PC-9 (cell line): ENCODE measurements at regions of chr5 and their contacts with region 1.

Region 1: GRCh38 chr5:149035372-149035790 is 27.5 kb downstream of the SH3TC2 start:
- DNase-seq: peak; percentile 66 to 79
- H3K4me3 ChIP-seq: no peak overlapping the region
- H3K27ac ChIP-seq: peak overlapping the region; percentile 1; the same call in 1 of the 2 replicates
- H3K4me1 ChIP-seq: peaks cover 58% of the 10 kb centered on the region
- H3K27me3 ChIP-seq: no peaks in the 10 kb centered on the region
- CTCF ChIP-seq: peak; percentile 90

Region 2: GRCh38 chr5:148297731-148298130 is 737.6 kb before region 1 on chr5:
- CTCF ChIA-PET with region 1: no interaction called
- POLR2A ChIA-PET with region 1: no interaction called
- intact Hi-C with region 1: no loop called
- DNase-seq: no peak
- H3K4me3 ChIP-seq: no peak overlapping the region
- H3K27ac ChIP-seq: no peak overlapping the region
- H3K4me1 ChIP-seq: no peaks in the 10 kb centered on the region
- H3K27me3 ChIP-seq: no peaks in the 10 kb centered on the region
- CTCF ChIP-seq: no peak

Region 3: GRCh38 chr5:148443998-148444397 is 591.4 kb before region 1 on chr5:
- CTCF ChIA-PET with region 1: no interaction called
- POLR2A ChIA-PET with region 1: no interaction called
- intact Hi-C with region 1: loop called (anchors 2 kb)
- DNase-seq: peak; percentile 39 to 65
- H3K4me3 ChIP-seq: no peak overlapping the region
- H3K27ac ChIP-seq: no peak overlapping the region
- H3K4me1 ChIP-seq: no peaks in the 10 kb centered on the region
- H3K27me3 ChIP-seq: no peaks in the 10 kb centered on the region
- CTCF ChIP-seq: peak; percentile 89

Region 4: GRCh38 chr5:148826053-148826738 is 209.2 kb before region 1 on chr5 and contains the start of gene ADRB2:
- CTCF ChIA-PET with region 1: no interaction called
- POLR2A ChIA-PET with region 1: interaction called, 33 read pairs
- intact Hi-C with region 1: loop called (anchors 1 kb)
- DNase-seq: peak; percentile 90 to 98
- H3K4me3 ChIP-seq: peak within 1 kb of the TSS; percentile 63
- H3K27ac ChIP-seq: peak within 1 kb of the TSS; percentile 68
- H3K4me1 ChIP-seq: peaks cover 24% of the 10 kb centered on the region
- H3K27me3 ChIP-seq: no peaks in the 10 kb centered on the region
- CTCF ChIP-seq: no peak
- total RNA-seq, gene ADRB2: 2.8 and 3.1 TPM in 2 replicates

Region 5: GRCh38 chr5:148963664-148964063 is 71.7 kb before region 1 on chr5:
- CTCF ChIA-PET with region 1: interaction called, 3 read pairs
- POLR2A ChIA-PET with region 1: no interaction called
- intact Hi-C with region 1: loop called (anchors 2 kb)
- DNase-seq: peak in 1 of 2 experiments; percentile 31
- H3K4me3 ChIP-seq: no peak overlapping the region
- H3K27ac ChIP-seq: peak overlapping the region; percentile 34
- H3K4me1 ChIP-seq: peaks cover 57% of the 10 kb centered on the region
- H3K27me3 ChIP-seq: no peaks in the 10 kb centered on the region
- CTCF ChIP-seq: no peak

Region 6: DNA sequence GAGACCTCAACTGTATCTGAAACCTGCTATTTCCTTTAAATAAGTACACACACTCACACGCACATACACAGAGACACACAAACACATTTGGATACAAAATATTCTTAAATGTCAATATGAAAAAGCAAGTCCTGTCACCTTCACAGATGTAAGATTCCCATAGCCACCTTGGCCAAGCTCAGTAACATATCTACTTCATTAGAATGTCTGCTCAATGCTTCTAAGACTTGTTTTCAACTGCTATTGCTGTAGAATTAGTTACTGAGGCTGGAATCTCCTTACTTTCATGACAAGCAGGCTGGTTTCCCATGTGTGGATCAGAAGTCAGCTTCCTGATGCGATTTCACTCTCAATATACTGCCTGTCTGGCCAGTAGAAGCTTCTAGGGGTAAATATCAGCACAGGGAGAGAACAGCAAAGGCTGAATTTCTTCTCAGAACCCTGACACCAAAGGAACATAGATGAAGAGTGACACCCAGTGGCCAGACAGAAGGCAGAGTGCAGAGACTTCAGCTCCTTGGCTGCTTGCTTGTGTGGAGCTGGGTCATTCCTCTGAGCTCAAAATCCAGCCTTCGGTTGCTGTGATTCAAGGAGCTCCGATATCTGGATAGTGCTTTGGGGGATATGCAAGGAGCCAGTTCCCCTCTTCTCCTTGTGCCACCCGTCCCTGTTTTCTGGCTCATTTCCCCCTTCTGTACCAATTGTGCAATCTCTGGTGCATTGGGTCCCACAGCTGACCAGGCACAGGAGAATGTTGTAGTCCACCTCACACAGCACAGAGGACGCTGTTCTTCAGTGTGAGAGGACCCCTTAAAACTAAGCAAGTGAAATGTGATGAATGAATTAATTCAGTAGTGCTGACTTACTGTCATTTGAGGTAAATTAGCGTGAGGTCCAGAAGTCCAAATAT is 79.3 kb after region 1 on chr5:
- CTCF ChIA-PET with region 1: interaction called, 39 read pairs
- POLR2A ChIA-PET with region 1: interaction called, 3 read pairs
- intact Hi-C with region 1: loop called (anchors 1 kb)
- DNase-seq: peak; percentile 74 to 82
- H3K4me3 ChIP-seq: peak overlapping the region; percentile 22; the same call in 1 of the 2 replicates
- H3K27ac ChIP-seq: peak overlapping the region; percentile 92
- H3K4me1 ChIP-seq: peaks cover 66% of the 10 kb centered on the region
- H3K27me3 ChIP-seq: no peaks in the 10 kb centered on the region
- CTCF ChIP-seq: peak; percentile 90